ENCODE measurements at regions of chr3 and their contacts with region 1.

Region 1: DNA sequence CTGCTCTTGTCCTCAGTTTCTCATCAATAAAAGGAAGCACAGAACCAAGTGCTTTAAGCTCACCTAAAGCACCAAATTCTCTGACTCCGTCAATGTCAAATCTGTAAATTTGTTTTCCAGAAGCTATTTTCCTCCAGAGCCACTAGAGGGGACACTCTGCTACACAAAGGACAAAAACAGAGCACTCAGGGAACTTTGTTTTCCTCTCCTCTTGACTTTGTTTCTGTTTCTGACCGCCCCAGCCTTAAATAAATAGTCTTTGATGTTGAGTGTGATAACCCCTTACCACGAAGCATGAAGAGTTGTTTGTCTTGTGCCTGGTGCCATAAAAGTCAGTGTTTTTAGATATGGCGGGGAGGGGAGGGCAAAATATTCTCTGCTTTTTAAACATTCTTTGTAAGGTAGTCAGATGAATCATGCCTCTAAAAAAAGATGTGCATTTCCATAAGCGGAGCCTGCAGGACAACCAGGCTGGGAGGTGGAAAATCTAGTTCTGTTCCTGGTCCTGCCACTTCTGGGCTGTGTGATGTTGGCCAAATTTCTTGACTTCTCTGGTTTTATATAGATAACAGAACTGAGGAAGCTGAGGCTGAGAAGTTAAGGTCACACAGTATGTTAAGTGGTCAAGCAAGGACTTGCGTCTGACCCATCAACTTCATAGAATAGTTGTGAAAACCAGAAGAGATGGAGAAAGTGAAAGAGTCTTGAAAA is 7.3 kb upstream of the ZBTB38 start:
- DNase-seq: peak in 2 of 5 donors; percentile 24 to 39
- H3K4me3 ChIP-seq: no peak overlapping the region
- H3K4me3 Mint-ChIP-seq: peak overlapping the region in 5 of 7 donors; percentile 30 to 73 (median 49)
- H3K27ac ChIP-seq: no peak overlapping the region
- H3K27ac Mint-ChIP-seq: peak overlapping the region in 1 of 8 donors; percentile 61
- H3K4me1 ChIP-seq: no peaks in the 10 kb centered on the region
- H3K4me1 Mint-ChIP-seq: peaks cover 1 to 10% (median 8%) of the 10 kb centered on the region in 3 donors
- H3K27me3 ChIP-seq: no peaks in the 10 kb centered on the region
- H3K27me3 Mint-ChIP-seq: peaks cover 0 to 3% of the 10 kb centered on the region in 2 donors

Region 2: DNA sequence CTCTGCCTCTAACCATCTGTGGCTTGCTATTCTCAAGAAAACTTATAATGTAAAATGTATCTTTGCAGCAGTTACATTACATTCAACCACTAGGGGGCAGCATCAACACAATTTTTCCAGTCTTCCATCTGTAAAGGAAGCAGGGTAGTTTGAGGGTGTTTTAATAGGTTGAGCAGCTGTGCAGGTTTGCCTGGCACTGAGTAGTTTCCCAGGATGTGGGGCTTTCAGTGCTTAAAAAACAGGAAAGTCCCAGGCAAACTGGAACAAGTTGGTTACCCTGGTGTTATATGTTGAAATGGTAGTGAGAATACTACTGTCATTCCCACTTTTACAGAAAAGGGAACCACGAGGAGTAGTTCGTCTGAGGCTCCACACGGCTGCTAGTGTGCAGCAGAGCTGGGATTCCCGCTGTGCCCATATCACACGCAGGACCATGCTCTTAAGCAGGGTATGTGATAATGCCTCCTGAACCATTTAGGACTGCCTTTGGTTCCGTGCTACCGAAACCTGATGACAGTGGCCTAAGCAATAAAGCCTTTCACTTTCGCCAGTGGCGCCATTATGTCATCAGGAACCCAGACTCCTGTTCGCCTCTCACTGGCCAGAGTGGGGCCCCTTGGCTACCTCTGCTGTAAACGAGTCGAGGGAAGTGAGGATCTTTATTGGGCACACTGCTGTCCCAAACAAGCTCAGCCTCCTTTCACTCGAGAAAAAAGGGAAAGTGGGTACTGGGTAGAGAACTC is 57.4 kb before region 1 on chr3:
- CTCF ChIA-PET with region 1: interaction called, 11 read pairs
- POLR2A ChIA-PET with region 1: no interaction called
- DNase-seq: peak; percentile 38 to 70 (median 66)
- H3K4me3 ChIP-seq: no peak overlapping the region
- H3K4me3 Mint-ChIP-seq: peak overlapping the region in 1 of 7 donors; percentile 10
- H3K27ac ChIP-seq: no peak overlapping the region
- H3K27ac Mint-ChIP-seq: no peak overlapping the region
- H3K4me1 ChIP-seq: peaks cover 41% of the 10 kb centered on the region
- H3K4me1 Mint-ChIP-seq: peaks cover 24 to 36% (median 34%) of the 10 kb centered on the region in 3 donors
- H3K27me3 ChIP-seq: no peaks in the 10 kb centered on the region
- H3K27me3 Mint-ChIP-seq: no peaks in the 10 kb centered on the region

Region 3: GRCh38 chr3:141412087-141412935 is 51.3 kb after region 1 on chr3:
- CTCF ChIA-PET with region 1: interaction called, 10 read pairs
- POLR2A ChIA-PET with region 1: no interaction called
- DNase-seq: peak; percentile 35 to 71 (median 57)
- H3K4me3 ChIP-seq: peak overlapping the region; percentile 38
- H3K4me3 Mint-ChIP-seq: peak overlapping the region; percentile 62 to 90 (median 87)
- H3K27ac ChIP-seq: peak overlapping the region; percentile 34
- H3K27ac Mint-ChIP-seq: peak overlapping the region; percentile 97 to 100 (median 99)
- H3K4me1 ChIP-seq: peaks cover 77% of the 10 kb centered on the region
- H3K4me1 Mint-ChIP-seq: peaks cover 82 to 99% (median 98%) of the 10 kb centered on the region in 3 donors
- H3K27me3 ChIP-seq: no peaks in the 10 kb centered on the region
- H3K27me3 Mint-ChIP-seq: no peaks in the 10 kb centered on the region

Region 4: GRCh38 chr3:141426404-141427034 is 65.5 kb after region 1 on chr3:
- CTCF ChIA-PET with region 1: interaction called, 11 read pairs
- POLR2A ChIA-PET with region 1: no interaction called
- DNase-seq: no peak
- H3K4me3 ChIP-seq: no peak overlapping the region
- H3K4me3 Mint-ChIP-seq: no peak overlapping the region
- H3K27ac ChIP-seq: peak overlapping the region; percentile 7
- H3K27ac Mint-ChIP-seq: peak overlapping the region in 4 of 8 donors; percentile 18 to 76 (median 52)
- H3K4me1 ChIP-seq: peaks cover 19% of the 10 kb centered on the region
- H3K4me1 Mint-ChIP-seq: peaks cover 43 to 82% (median 63%) of the 10 kb centered on the region in 3 donors
- H3K27me3 ChIP-seq: no peaks in the 10 kb centered on the region
- H3K27me3 Mint-ChIP-seq: no peaks in the 10 kb centered on the region